ENCODE measurements at regions of chr3 and their contacts with region 1.

Region 1: DNA sequence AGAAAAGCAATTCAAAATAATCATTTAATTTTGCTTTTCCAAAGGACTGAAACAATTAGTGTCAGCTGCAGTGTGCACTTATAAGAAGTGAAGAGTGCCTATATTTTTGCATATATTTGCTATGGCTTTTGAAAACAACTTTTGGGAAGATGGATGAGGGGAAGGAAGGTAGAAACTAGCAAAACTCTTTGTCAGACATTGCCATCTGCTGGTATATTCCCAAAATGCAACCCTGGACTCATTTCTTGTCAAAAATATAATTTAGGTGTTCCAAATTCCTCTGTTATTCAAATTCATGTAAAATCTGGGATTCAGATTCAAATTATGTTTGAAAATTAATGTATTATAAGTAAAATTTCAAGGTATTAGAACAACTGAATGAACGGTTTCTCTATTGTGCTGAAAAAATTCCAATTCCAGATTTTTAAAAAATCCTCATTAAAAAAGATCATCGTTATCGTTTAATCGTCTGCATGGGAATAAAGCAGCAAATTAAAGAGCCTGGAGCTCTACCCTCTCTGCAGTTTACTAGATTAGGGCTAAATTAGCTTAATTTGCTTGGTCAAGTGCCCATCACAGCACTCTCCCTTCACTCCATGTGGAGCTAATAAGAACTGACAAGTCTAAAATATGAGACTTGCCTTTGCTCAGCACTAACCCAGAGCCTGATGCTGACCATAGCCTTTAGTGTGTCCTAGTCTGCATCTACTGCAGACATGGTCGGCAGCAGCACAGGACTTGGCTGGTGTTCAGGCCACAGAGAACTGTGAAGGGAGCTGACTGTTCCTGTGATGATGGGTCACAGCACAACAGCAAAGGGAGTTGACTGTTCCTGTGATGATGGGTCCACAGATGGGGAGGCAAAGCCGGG is 67.9 kb upstream of the MITF start:
- DNase-seq: peak in 1 of 2 donors; percentile 51
- ATAC-seq: peak in 7 of 8 donors; percentile 55 to 86 (median 61)
- H3K4me3 ChIP-seq: no peak overlapping the region
- H3K27ac ChIP-seq: no peak overlapping the region
- H3K4me1 ChIP-seq: peaks cover 0 to 17% (median 11%) of the 10 kb centered on the region in 9 donors
- H3K27me3 ChIP-seq: no peaks in the 10 kb centered on the region
- CTCF ChIP-seq: peak; percentile 68 to 88 (median 82)

Region 2: DNA sequence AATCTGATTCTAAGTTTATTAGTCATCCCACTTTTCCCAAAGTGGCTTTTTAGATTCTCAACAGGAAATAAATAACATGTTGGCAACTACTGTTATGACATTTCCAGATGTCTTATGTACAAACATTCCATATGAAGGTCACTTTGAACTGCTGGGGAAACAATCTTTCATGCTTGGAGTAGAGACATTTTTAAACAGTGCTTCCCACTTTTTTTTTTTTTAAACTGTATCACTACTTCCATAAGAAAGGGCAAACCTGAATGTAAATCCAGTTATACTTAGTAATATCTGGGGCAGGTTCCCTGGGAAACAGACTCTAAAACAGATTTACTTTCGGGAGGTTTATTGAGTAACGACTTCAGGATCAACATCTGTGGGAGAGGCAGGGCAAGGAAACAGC is 1212.7 kb before region 1 on chr3:
- intact Hi-C with region 1: no loop called
- DNase-seq: no peak
- ATAC-seq: no peak
- H3K4me3 ChIP-seq: no peak overlapping the region
- H3K27ac ChIP-seq: no peak overlapping the region
- H3K4me1 ChIP-seq: no peaks in the 10 kb centered on the region
- H3K27me3 ChIP-seq: peaks cover 0 to 5% (median 0%) of the 10 kb centered on the region in 7 donors
- CTCF ChIP-seq: no peak

Region 3: GRCh38 chr3:69092030-69092516 is 579.2 kb before region 1 on chr3:
- intact Hi-C with region 1: no loop called
- DNase-seq: no peak
- ATAC-seq: peak in 3 of 8 donors; percentile 17 to 45 (median 40)
- H3K4me3 ChIP-seq: peak overlapping the region in 2 of 10 donors; percentile 6 to 20
- H3K27ac ChIP-seq: peak overlapping the region in 9 of 10 donors; percentile 50 to 96 (median 60)
- H3K4me1 ChIP-seq: peaks cover 16 to 100% (median 95%) of the 10 kb centered on the region in 9 donors
- H3K27me3 ChIP-seq: no peaks in the 10 kb centered on the region
- CTCF ChIP-seq: no peak

Region 4: GRCh38 chr3:69306239-69307185 is 364.8 kb before region 1 on chr3:
- intact Hi-C with region 1: loop called in 4 of 10 experiments (anchors 5 kb)
- DNase-seq: peak; percentile 55 to 82
- ATAC-seq: peak; percentile 89 to 97 (median 94)
- H3K4me3 ChIP-seq: no peak overlapping the region
- H3K27ac ChIP-seq: peak overlapping the region in 9 of 10 donors; percentile 32 to 78 (median 63)
- H3K4me1 ChIP-seq: peaks cover 0 to 22% (median 4%) of the 10 kb centered on the region in 9 donors
- H3K27me3 ChIP-seq: no peaks in the 10 kb centered on the region
- CTCF ChIP-seq: peak; percentile 88 to 97 (median 95)

Region 5: DNA sequence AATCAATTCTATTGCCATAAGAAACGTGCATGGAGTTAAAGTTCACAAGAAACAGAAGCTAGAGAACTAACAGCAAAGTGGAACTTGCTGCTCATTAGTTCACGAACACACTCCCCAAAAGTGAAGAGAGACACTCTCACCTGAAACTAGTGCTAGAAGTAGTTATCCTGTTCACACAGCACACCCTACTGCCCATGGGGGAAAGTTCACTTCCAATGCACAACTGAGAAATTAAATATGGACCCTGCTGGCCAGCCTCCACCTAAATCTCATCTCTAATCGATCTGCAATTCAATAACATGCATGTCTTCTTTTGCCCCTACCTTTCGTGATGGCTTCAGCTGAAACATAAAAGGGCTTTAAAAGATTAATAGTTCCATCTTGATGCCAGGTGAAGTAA is 246.1 kb before region 1 on chr3:
- intact Hi-C with region 1: loop called in 2 of 10 experiments (anchors 5 kb)
- DNase-seq: peak in 1 of 2 donors; percentile 36
- ATAC-seq: peak in 5 of 8 donors; percentile 38 to 66 (median 60)
- H3K4me3 ChIP-seq: no peak overlapping the region
- H3K27ac ChIP-seq: no peak overlapping the region
- H3K4me1 ChIP-seq: peaks cover 0 to 22% (median 13%) of the 10 kb centered on the region in 9 donors
- H3K27me3 ChIP-seq: no peaks in the 10 kb centered on the region
- CTCF ChIP-seq: peak; percentile 21 to 67 (median 59)

Region 6: GRCh38 chr3:69439643-69440270 is 231.6 kb before region 1 on chr3:
- intact Hi-C with region 1: loop called in 9 of 10 experiments (anchors 5 to 10 kb)
- DNase-seq: peak in 1 of 2 donors; percentile 13
- ATAC-seq: peak in 5 of 8 donors; percentile 11 to 49 (median 39)
- H3K4me3 ChIP-seq: peak overlapping the region in 4 of 10 donors; percentile 12 to 33 (median 20)
- H3K27ac ChIP-seq: peak overlapping the region in 1 of 10 donors; percentile 54
- H3K4me1 ChIP-seq: peaks cover 0 to 22% (median 0%) of the 10 kb centered on the region in 9 donors
- H3K27me3 ChIP-seq: no peaks in the 10 kb centered on the region
- CTCF ChIP-seq: peak in 8 of 9 donors; percentile 39 to 73 (median 68)

Region 7: DNA sequence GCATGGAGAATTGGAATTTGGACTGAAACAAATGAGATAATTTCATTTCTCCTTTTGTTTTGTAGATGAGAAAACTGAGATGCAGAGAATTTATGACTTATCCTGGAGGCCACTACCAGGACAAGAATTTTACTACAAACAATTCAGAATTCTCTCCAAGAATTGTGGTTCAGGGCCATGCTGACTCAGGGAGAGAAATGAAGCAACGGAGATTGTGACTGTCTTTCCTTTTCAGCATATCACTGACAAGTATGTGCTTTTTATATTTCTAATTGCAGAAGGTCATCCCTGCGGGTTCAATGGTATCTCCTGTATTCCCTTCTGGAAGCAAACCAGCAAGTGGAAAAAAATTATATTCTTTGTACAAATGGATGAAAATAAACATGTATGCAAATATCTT is 102.9 kb before region 1 on chr3:
- intact Hi-C with region 1: no loop called
- DNase-seq: no peak
- ATAC-seq: no peak
- H3K4me3 ChIP-seq: no peak overlapping the region
- H3K27ac ChIP-seq: no peak overlapping the region
- H3K4me1 ChIP-seq: peaks cover 0 to 18% (median 10%) of the 10 kb centered on the region in 9 donors
- H3K27me3 ChIP-seq: no peaks in the 10 kb centered on the region
- CTCF ChIP-seq: no peak

Measured in heart right ventricle (tissue), 16 donors.